Spleen (tissue), 13 donors: ENCODE measurements at regions of chr17 and their contacts with region 1.

Region 1: GRCh38 chr17:43170766-43171585 is at the start of gene NBR1:
- DNase-seq: peak; percentile 96
- H3K4me3 ChIP-seq: peak within 1 kb of the TSS; percentile 59 to 87 (median 80)
- H3K27ac ChIP-seq: peak within 1 kb of the TSS; percentile 94 to 99 (median 98)
- H3K4me1 ChIP-seq: peaks cover 25 to 64% (median 61%) of the 10 kb centered on the region in 6 donors
- H3K27me3 ChIP-seq: no peaks in the 10 kb centered on the region
- CTCF ChIP-seq: peak in 9 of 11 experiments; percentile 9 to 57 (median 35)
- POLR2A ChIP-seq: peak; percentile 17 to 76 (median 28)
- total RNA-seq, gene NBR1: 69.2 to 103 (median 91.5) TPM

Region 2: DNA sequence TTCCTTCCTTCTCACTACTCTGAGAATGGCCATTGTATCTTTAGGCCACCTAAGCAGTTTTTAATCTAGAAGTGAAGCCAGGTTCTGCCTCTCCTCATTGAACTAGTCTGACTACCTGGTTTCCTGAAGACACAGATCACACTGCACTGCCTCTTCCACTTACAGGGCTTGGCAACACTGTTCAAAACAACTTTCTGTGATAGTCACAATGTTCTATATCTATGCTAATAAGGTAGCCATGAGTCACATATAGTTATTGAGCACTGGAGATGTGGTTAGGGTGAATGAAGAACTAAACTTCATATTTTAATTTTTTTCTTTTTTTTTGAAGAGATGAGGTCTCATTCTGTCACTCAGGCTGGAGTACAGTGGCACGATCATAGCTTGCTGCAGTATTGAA is 119.0 kb before region 1 on chr17:
- intact Hi-C with region 1: no loop called
- DNase-seq: no peak
- H3K4me3 ChIP-seq: no peak overlapping the region
- H3K27ac ChIP-seq: no peak overlapping the region
- H3K4me1 ChIP-seq: no peaks in the 10 kb centered on the region
- H3K27me3 ChIP-seq: no peaks in the 10 kb centered on the region
- CTCF ChIP-seq: no peak
- POLR2A ChIP-seq: no peak

Region 3: DNA sequence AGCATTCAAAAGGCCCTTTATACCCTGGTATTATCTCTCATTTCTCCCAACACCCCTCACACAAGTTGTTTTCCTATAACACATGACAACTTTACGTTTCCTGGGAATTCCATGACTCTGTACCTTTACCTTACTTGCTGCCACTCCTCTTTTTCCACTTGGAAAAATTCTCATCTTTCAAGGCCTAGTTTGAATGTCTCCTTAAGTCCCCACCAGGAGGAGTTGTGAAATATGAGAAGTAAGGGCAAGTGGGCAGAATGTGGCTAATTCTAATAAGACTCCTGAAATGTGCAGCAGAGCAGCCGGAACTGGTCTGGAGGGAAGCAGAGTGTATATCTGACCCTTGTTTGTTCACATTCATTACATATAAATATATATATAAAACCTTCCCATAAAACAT is 85.5 kb before region 1 on chr17:
- intact Hi-C with region 1: no loop called
- DNase-seq: no peak
- H3K4me3 ChIP-seq: no peak overlapping the region
- H3K27ac ChIP-seq: no peak overlapping the region
- H3K4me1 ChIP-seq: no peaks in the 10 kb centered on the region
- H3K27me3 ChIP-seq: no peaks in the 10 kb centered on the region
- CTCF ChIP-seq: no peak
- POLR2A ChIP-seq: no peak

Region 4: GRCh38 chr17:43125133-43125966 is 45.6 kb before region 1 on chr17 and contains the start of gene BRCA1:
- intact Hi-C with region 1: loop called (anchors 5 kb)
- DNase-seq: peak; percentile 96
- H3K4me3 ChIP-seq: peak within 1 kb of the TSS; percentile 59 to 78 (median 73)
- H3K27ac ChIP-seq: peak within 1 kb of the TSS; percentile 80 to 89 (median 87)
- H3K4me1 ChIP-seq: peaks cover 7 to 57% (median 40%) of the 10 kb centered on the region in 6 donors
- H3K27me3 ChIP-seq: no peaks in the 10 kb centered on the region
- CTCF ChIP-seq: peak in 1 of 11 experiments; percentile 25
- POLR2A ChIP-seq: no peak
- total RNA-seq, gene BRCA1: 5.2 to 13.6 (median 10.0) TPM

Region 5: DNA sequence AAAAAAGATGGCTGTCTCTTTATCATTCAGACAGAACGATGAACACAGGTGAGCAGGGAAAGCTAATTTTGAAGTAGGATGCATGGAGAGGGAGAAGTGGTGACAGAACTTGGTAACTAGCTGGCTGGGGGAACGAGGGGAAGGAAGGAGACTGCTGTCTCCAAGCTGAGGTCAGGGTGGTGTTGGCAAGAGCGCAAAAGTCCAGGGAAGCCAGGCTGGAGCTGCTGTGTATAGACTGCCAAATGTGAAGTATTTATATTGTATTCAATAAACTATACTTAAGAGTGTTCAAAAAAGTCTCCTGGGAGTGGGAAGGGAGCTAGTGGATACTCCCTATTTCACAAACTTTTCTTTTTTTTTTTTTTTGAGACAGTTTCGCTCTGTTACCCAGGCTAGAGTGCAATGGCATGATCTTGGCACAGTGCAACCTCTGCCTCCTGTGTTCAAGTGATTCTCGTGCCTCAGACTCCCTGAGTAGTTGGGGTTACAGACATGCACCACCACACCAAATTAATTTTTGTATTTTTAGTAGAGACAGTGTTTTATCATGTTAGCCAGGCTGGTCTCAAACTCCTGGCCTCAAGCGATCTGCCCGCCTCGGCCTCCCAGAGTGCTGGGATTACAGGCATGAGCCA is 48.9 kb after region 1 on chr17:
- intact Hi-C with region 1: no loop called
- DNase-seq: peak; percentile 23
- H3K4me3 ChIP-seq: no peak overlapping the region
- H3K27ac ChIP-seq: no peak overlapping the region
- H3K4me1 ChIP-seq: peaks cover 0 to 13% (median 0%) of the 10 kb centered on the region in 6 donors
- H3K27me3 ChIP-seq: no peaks in the 10 kb centered on the region
- CTCF ChIP-seq: no peak
- POLR2A ChIP-seq: no peak

Region 6: GRCh38 chr17:43356999-43357398 is 186.0 kb after region 1 on chr17:
- intact Hi-C with region 1: no loop called
- DNase-seq: no peak
- H3K4me3 ChIP-seq: no peak overlapping the region
- H3K27ac ChIP-seq: no peak overlapping the region
- H3K4me1 ChIP-seq: peaks cover 0 to 19% (median 13%) of the 10 kb centered on the region in 6 donors
- H3K27me3 ChIP-seq: no peaks in the 10 kb centered on the region
- CTCF ChIP-seq: no peak
- POLR2A ChIP-seq: no peak